ENCODE measurements at regions of chr10 and their contacts with region 1.

Region 1: DNA sequence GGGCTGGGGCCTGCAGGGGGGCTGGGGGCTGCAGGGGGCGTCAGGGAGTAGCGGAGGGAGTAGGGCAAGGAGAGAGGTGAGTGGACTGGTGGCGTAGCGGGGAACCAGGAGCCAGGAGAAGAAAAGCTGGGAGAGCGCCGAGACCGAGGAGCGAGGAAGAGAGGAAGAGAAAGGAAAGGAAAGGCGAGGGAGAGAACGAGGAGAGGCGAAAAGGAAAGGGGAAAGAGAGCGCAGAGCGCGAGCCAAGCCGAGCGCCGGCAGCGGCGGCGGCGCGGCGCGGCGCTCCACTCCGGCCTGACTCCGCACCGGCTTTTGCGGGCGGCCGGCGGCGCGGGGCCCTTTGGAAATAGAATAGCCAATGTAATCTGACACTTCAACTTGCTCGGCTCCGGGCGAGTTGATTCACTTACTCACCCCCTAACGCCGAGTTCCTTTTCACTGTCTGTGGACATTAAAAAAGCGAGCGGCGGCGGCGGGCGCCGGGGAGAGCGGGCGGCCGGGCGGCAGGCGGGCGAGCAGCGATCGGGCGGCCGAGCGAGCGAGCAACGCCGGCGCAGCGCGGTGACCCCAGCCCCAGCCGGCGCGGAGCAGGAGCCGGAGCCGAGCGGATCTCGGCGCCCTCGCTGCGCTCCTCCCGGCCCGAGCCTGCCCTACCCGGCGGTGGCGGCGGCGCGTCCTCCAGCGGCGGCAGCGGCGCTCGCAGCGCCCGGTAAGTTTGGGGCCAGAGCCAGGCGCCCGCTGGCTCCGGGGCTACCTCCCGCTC is at the start of gene ZMIZ1:
- DNase-seq: peak; percentile 91 to 93
- H3K4me3 ChIP-seq: peak within 1 kb of the TSS; percentile 82
- H3K4me3 Mint-ChIP-seq: peak within 1 kb of the TSS; percentile 74
- H3K27ac Mint-ChIP-seq: peak within 1 kb of the TSS; percentile 89
- H3K4me1 ChIP-seq: peaks cover 37% of the 10 kb centered on the region
- H3K4me1 Mint-ChIP-seq: peaks cover 21% of the 10 kb centered on the region
- H3K27me3 ChIP-seq: no peaks in the 10 kb centered on the region
- H3K27me3 Mint-ChIP-seq: no peaks in the 10 kb centered on the region
- CTCF ChIP-seq: peak; percentile 25 to 41
- total RNA-seq, gene ZMIZ1: 42.3 and 43.7 TPM in 2 replicates

Region 2: DNA sequence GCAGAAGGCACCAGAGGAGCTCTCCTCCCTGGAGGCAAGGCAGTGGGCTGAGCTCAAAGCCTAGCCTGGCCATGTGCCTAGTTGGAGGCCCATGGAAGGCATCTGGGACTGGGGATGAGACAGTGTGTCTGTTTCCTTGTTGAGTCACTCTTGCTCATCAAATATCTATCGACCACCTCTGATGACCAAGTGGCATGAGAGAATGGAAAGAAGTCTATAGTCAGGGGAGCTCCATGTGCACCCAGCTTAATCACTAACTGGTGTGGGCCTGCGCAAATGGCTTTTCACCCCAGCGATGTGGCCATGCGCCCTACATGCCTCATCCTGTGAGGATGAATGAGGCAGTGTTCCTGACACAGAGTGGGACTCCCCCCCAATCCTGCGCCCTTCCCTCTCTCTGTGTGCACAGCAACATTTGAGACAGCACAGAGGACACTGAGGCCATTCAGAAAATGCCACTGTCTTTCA is 805.2 kb before region 1 on chr10:
- CTCF ChIA-PET with region 1: no interaction called
- POLR2A ChIA-PET with region 1: no interaction called
- intact Hi-C with region 1: loop called (anchors 5 kb)
- DNase-seq: no peak
- H3K4me3 ChIP-seq: no peak overlapping the region
- H3K4me3 Mint-ChIP-seq: no peak overlapping the region
- H3K27ac Mint-ChIP-seq: no peak overlapping the region
- H3K4me1 ChIP-seq: peaks cover 40% of the 10 kb centered on the region
- H3K4me1 Mint-ChIP-seq: peaks cover 45% of the 10 kb centered on the region
- H3K27me3 ChIP-seq: no peaks in the 10 kb centered on the region
- H3K27me3 Mint-ChIP-seq: no peaks in the 10 kb centered on the region
- CTCF ChIP-seq: no peak

Region 3: DNA sequence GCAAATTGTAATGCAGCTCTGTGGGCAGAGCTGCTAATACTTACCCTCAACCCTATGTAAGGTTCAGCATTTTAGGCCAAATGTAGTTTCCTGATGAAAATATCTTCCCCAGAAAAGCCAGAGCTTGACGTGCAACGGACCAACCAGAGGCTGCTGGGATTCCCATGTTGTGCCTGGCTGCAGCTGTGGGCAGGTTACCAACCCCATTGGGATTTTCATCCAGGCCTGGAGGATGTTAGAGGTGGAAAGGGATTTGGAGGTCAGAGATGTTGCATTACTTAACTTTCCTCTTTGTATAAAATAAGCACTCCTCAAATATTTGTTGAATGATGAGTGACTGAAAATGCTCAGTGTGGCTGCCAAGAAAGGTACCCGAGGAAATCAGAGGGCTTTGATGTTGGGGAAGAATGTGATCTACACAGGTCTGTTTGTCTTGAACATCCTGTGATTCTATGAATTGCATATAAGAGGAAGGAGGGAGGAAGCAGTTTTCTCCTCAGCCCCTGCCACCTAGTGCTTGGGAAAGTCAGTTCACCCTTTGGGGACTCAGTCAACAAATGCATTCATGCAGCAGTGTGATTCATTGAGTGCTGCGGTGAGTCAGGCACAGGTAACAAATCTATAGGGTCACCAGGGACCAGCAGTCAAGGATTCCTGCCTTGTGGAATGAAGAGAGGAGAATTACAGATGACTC is 547.9 kb before region 1 on chr10:
- CTCF ChIA-PET with region 1: no interaction called
- POLR2A ChIA-PET with region 1: no interaction called
- intact Hi-C with region 1: loop called (anchors 10 kb)
- DNase-seq: peak; percentile 68 to 71
- H3K4me3 ChIP-seq: no peak overlapping the region
- H3K4me3 Mint-ChIP-seq: no peak overlapping the region
- H3K27ac Mint-ChIP-seq: no peak overlapping the region
- H3K4me1 ChIP-seq: peaks cover 4% of the 10 kb centered on the region; the same call in 1 of the 2 replicates
- H3K4me1 Mint-ChIP-seq: peaks cover 15% of the 10 kb centered on the region
- H3K27me3 ChIP-seq: no peaks in the 10 kb centered on the region
- H3K27me3 Mint-ChIP-seq: no peaks in the 10 kb centered on the region
- CTCF ChIP-seq: peak; percentile 37 to 58

Region 4: GRCh38 chr10:78805176-78805575 is 263.6 kb before region 1 on chr10:
- CTCF ChIA-PET with region 1: no interaction called
- POLR2A ChIA-PET with region 1: no interaction called
- intact Hi-C with region 1: loop called (anchors 5 kb)
- DNase-seq: peak; percentile 69 to 75
- H3K4me3 ChIP-seq: no peak overlapping the region
- H3K4me3 Mint-ChIP-seq: no peak overlapping the region
- H3K27ac Mint-ChIP-seq: peak overlapping the region; percentile 84
- H3K4me1 ChIP-seq: peaks cover 16% of the 10 kb centered on the region
- H3K4me1 Mint-ChIP-seq: peaks cover 19% of the 10 kb centered on the region
- H3K27me3 ChIP-seq: no peaks in the 10 kb centered on the region
- H3K27me3 Mint-ChIP-seq: no peaks in the 10 kb centered on the region
- CTCF ChIP-seq: no peak

Region 5: DNA sequence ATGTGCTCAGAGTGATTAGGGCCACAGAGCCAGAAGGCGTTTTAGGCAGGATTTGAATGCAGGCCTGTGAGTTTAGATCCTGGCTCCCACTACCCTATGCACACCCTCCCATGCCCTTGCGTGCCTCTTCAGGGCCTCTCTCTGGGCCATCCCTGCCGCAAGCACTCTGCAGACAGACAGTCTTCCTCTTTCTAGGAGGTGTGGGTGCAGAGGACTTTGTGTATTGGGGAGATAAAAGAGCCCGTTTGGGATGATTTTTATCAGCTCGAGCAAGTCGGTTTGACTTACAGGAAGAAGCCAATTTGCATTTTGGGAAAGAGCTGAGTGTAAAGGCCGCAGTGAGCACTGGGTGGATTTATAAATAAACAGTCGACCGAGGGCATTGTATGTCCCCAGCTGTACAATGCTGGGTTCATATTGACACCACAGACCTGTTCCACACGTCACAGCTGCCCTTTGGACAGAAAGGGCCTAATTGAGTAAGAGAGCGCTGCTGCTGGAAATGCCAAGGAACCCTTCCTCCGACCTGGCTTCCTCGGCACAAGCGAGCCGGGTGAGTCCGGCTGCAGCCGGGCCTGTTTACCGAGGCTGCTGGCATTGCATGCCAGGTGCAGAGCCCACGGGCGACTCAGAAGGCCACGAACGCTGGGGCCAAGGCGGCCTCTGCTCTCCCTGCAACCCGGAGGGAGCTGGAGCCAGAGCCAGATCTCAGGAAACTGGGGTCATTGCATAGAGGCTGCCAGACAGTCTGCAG is 25.1 kb after region 1 on chr10:
- CTCF ChIA-PET with region 1: interaction called, 9 read pairs
- POLR2A ChIA-PET with region 1: no interaction called
- intact Hi-C with region 1: loop called (anchors 1 kb)
- DNase-seq: peak; percentile 72 to 81
- H3K4me3 ChIP-seq: no peak overlapping the region
- H3K4me3 Mint-ChIP-seq: no peak overlapping the region
- H3K27ac Mint-ChIP-seq: peak overlapping the region; percentile 77
- H3K4me1 ChIP-seq: peaks cover 28% of the 10 kb centered on the region
- H3K4me1 Mint-ChIP-seq: peaks cover 51% of the 10 kb centered on the region
- H3K27me3 ChIP-seq: no peaks in the 10 kb centered on the region
- H3K27me3 Mint-ChIP-seq: no peaks in the 10 kb centered on the region
- CTCF ChIP-seq: peak in 1 of 2 experiments; percentile 3

Region 6: DNA sequence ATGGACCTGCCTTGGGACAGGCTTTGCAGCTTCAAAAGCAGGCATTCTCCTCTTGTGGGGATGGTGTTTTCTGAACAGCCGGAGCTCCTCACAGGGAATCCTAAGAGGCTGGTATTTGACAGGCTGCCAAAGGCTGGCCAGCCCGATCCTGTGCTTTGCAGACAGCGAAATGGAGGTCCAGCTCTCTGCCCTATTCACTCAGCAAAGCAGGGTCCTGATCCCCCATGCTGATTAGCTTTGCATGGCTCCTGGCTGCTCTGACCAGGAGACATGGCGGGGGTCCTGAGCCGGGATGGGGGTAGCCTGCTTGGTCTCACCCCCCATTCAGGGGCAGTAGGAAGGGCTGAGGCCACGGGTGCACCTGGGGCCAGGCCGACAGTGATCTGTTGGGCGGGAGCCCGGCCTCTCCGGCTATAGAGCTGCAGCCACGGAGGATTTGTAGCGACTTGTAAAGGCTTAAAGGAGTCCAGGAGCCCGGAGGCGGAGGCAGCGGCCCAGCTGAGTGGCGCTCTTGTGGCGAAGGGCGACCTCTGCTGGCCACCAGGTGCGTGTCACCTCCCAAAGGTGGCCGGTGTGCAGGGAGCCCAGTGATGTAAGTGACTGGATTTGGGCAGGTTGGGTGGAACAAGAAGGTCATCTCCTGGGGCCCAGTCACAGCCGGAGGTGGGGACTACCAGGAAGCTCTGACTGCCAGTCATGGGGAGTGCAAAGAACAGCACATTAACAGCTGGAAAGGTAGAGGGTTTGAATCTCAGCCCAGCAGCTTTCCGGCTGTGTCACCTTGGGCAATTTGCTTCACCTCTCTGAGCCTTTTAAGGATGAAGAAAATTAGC is 126.6 kb after region 1 on chr10:
- CTCF ChIA-PET with region 1: interaction called, 19 read pairs
- POLR2A ChIA-PET with region 1: interaction called, 4 read pairs
- intact Hi-C with region 1: loop called (anchors 1 kb)
- DNase-seq: peak; percentile 82 to 89
- H3K4me3 ChIP-seq: no peak overlapping the region
- H3K4me3 Mint-ChIP-seq: no peak overlapping the region
- H3K27ac Mint-ChIP-seq: peak overlapping the region; percentile 54
- H3K4me1 ChIP-seq: peaks cover 6% of the 10 kb centered on the region
- H3K4me1 Mint-ChIP-seq: peaks cover 6% of the 10 kb centered on the region
- H3K27me3 ChIP-seq: no peaks in the 10 kb centered on the region
- H3K27me3 Mint-ChIP-seq: no peaks in the 10 kb centered on the region
- CTCF ChIP-seq: peak; percentile 94 to 96

Measured in Caco-2 (cell line).